Transverse colon (tissue), 4 donors: ENCODE measurements at regions of chr19 and their contacts with region 1.

Region 1: DNA sequence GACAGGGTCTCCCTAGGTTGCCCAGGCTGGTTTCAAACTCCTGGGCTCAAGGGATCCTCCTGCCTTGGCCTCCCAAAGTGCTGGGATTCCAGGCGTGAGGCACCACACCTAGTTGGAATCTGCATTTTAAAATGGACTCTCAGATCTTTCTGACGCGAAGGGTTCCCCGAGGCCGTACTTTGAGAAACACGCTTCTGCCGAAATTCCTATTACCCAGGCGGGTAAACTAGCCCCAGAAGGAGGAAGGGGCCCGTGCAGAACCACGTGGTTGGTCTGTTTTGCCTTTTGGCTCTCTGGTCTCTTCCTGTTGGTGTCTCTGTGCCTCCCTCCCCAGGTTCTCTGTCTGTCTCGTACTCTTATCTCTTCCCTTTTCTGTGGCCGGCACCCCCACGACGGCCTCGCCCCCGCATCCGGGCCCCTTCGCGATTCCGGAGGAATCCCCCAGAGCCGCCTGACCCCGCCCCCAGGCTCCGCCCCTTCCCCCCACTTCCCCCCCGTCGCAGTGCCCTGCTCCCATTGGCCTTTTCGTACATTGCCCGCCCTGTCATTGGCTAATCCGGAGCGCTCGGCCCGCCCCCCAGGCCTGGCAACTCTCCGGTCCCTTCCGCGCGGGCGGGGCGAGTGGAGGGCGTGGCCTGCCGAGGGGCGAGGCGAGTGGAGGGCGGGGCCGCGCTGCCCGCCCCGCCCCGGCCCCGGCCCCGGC is at the start of gene TNFAIP8L1:
- DNase-seq: peak; percentile 99
- H3K4me3 ChIP-seq: peak within 1 kb of the TSS; percentile 68 to 84 (median 73)
- H3K27ac ChIP-seq: peak within 1 kb of the TSS; percentile 78 to 89 (median 86)
- H3K4me1 ChIP-seq: peaks cover 18 to 41% (median 33%) of the 10 kb centered on the region in 4 donors
- H3K27me3 ChIP-seq: peaks cover 12% of the 10 kb centered on the region
- CTCF ChIP-seq: no peak
- EP300 ChIP-seq: no peak
- POLR2A ChIP-seq: no peak
- total RNA-seq, gene TNFAIP8L1: 4.5 to 12.0 (median 8.5) TPM

Region 2: DNA sequence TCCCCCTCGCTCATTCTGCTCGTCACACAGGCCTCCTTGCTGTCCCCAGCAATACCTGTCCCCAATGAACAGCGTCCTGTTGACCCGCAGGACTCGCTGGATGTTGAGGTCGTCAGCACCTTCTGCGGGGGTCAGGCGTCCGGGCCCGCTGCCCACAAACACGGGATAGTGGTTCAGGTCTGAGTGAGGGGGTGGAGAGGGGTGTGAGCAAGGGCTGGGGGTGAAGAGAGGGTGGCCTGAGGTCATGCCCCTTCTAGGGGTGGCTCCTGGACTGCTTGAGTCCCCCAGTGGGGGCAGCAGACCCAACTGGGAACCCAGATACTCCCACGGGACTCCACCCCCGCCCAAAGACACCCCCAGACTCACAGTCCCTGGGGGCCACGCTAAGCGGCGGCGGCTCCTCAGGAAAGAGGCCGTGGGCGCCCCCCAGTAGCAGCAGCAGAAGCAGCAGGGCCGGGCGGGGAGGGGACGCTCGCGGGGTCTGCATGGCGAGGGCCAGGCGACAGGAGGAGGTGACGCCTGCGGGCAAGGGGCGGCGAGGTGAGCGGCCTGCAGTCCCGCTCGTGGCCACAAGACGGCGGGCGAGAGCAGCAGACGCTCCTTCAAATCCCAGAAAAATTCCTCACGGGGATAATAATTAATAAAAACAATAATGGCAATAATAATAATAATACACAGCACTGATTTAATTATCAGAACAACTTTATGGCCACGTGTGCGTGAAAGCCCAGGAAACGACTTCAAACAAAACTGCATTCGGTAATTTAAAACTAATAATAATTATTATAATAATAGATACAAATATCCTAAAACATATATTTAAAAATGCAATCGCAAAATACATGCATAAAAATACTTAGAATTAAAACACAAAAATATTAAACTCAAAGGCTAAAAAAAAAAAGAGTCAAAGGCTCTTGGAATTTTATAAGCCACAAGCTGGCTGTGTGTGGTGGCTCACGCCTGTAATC is 80.7 kb before region 1 on chr19:
- in situ Hi-C with region 1: no loop called
- intact Hi-C with region 1: loop called (anchors 5 kb)
- DNase-seq: peak; percentile 35
- H3K4me3 ChIP-seq: peak overlapping the region in 2 of 4 donors; percentile 16 to 21
- H3K27ac ChIP-seq: no peak overlapping the region
- H3K4me1 ChIP-seq: peaks cover 0 to 9% (median 2%) of the 10 kb centered on the region in 4 donors
- H3K27me3 ChIP-seq: no peaks in the 10 kb centered on the region
- CTCF ChIP-seq: peak; percentile 96 to 100 (median 100)
- EP300 ChIP-seq: no peak
- POLR2A ChIP-seq: no peak

Region 3: DNA sequence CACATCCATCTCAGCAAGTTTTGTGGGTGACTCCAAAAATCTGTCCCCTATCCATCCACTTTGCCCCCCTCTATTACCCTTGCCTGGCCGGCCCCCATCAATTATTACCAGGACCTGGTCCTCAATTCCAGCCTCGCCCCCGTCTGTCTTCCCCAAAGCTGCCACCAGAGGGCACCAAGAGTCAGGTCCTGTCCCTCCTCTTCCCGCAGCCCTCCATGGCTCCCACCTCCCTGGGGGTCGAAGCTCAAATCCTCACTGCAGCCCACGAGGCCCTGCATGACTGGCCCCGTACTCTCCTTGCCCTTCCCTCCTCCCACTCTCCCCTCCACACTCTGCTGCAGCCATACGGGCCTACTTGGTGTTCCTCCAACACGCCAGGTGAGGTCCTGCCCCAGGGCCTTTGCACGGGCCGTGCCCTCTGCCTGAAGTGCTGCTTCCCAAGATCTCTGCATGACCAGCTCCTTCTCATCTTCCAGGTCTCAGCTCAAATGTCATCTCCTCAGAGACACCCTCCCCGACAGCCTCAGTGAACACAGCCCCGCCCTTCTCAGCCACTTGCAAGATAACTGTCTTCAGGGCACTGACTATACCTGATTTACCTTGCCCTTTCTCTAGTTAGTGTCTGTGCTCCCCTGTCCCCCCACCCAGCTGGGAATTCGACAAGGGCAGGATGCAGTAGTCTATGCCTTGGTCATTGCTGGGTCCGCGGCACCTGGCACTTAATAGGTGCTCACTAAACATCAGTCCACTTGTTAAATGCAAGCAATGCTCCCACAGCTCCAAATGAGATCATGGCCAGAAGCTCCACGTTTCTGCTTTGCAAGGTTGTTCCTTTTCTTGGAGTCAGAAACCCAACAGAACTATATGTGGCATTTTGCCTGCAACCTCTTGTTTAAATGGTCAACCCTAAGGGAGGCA is 62.7 kb before region 1 on chr19:
- in situ Hi-C with region 1: no loop called
- intact Hi-C with region 1: loop called (anchors 5 kb)
- DNase-seq: peak; percentile 68
- H3K4me3 ChIP-seq: no peak overlapping the region
- H3K27ac ChIP-seq: peak overlapping the region in 2 of 4 donors; percentile 6 to 26
- H3K4me1 ChIP-seq: peaks cover 0 to 8% (median 5%) of the 10 kb centered on the region in 4 donors
- H3K27me3 ChIP-seq: peaks cover 86% of the 10 kb centered on the region
- CTCF ChIP-seq: peak; percentile 65 to 74 (median 70)
- EP300 ChIP-seq: no peak
- POLR2A ChIP-seq: no peak